Activated naive CD8-positive, alpha-beta T cell treated with anti-CD3 and anti-CD28 coated beads, Interleukin-2, amount 10 ng/mL, durations not matched to agents 7 days and 5 days (primary cell): ENCODE measurements at regions of chr14 and their contacts with region 1.

Region 1: GRCh38 chr14:31207755-31208545 is at the start of gene HECTD1:
- DNase-seq: peak; percentile 94
- ATAC-seq: peak; percentile 73
- H3K4me3 Mint-ChIP-seq: peak within 1 kb of the TSS; percentile 95
- H3K27ac Mint-ChIP-seq: peak within 1 kb of the TSS; percentile 100
- H3K4me1 Mint-ChIP-seq: peaks cover 34% of the 10 kb centered on the region
- H3K27me3 Mint-ChIP-seq: no peaks in the 10 kb centered on the region
- total RNA-seq, gene HECTD1: 105 to 117 TPM

Region 2: GRCh38 chr14:31026395-31027118 is 181.4 kb before region 1 on chr14:
- POLR2A ChIA-PET with region 1: interaction called, 22 read pairs
- DNase-seq: peak; percentile 93
- ATAC-seq: peak; percentile 94
- H3K4me3 Mint-ChIP-seq: peak overlapping the region; percentile 97
- H3K27ac Mint-ChIP-seq: peak overlapping the region; percentile 98
- H3K4me1 Mint-ChIP-seq: peaks cover 44% of the 10 kb centered on the region
- H3K27me3 Mint-ChIP-seq: no peaks in the 10 kb centered on the region

Region 3: GRCh38 chr14:31106768-31107167 is 101.2 kb before region 1 on chr14:
- POLR2A ChIA-PET with region 1: no interaction called
- DNase-seq: no peak
- ATAC-seq: no peak
- H3K4me3 Mint-ChIP-seq: no peak overlapping the region
- H3K27ac Mint-ChIP-seq: no peak overlapping the region
- H3K4me1 Mint-ChIP-seq: no peaks in the 10 kb centered on the region
- H3K27me3 Mint-ChIP-seq: no peaks in the 10 kb centered on the region

Region 4: GRCh38 chr14:31127690-31128089 is 80.3 kb before region 1 on chr14:
- POLR2A ChIA-PET with region 1: interaction called, 17 read pairs
- DNase-seq: no peak
- ATAC-seq: peak; percentile 87
- H3K4me3 Mint-ChIP-seq: peak overlapping the region; percentile 42
- H3K27ac Mint-ChIP-seq: peak overlapping the region; percentile 78
- H3K4me1 Mint-ChIP-seq: peaks cover 30% of the 10 kb centered on the region
- H3K27me3 Mint-ChIP-seq: no peaks in the 10 kb centered on the region

Region 5: GRCh38 chr14:31194095-31194494 is 13.9 kb before region 1 on chr14:
- POLR2A ChIA-PET with region 1: interaction called, 14 read pairs
- DNase-seq: no peak
- ATAC-seq: no peak
- H3K4me3 Mint-ChIP-seq: no peak overlapping the region
- H3K27ac Mint-ChIP-seq: peak overlapping the region; percentile 30
- H3K4me1 Mint-ChIP-seq: peaks cover 33% of the 10 kb centered on the region
- H3K27me3 Mint-ChIP-seq: no peaks in the 10 kb centered on the region

Region 6: GRCh38 chr14:31420319-31421111 is 212.6 kb after region 1 on chr14 and contains the start of gene HEATR5A:
- POLR2A ChIA-PET with region 1: interaction called, 19 read pairs
- DNase-seq: peak; percentile 96
- ATAC-seq: peak; percentile 97
- H3K4me3 Mint-ChIP-seq: peak within 1 kb of the TSS; percentile 99
- H3K27ac Mint-ChIP-seq: peak within 1 kb of the TSS; percentile 89
- H3K4me1 Mint-ChIP-seq: peaks cover 13% of the 10 kb centered on the region
- H3K27me3 Mint-ChIP-seq: peaks cover 10% of the 10 kb centered on the region
- total RNA-seq, gene HEATR5A: 9.4 to 11.5 TPM